ENCODE measurements at regions of chr17 and their contacts with region 1.

Region 1: GRCh38 chr17:59619293-59620063 is at the start of gene CLTC:
- DNase-seq: peak; percentile 97
- ATAC-seq: peak; percentile 85
- H3K4me3 Mint-ChIP-seq: peak within 1 kb of the TSS; percentile 89
- H3K27ac Mint-ChIP-seq: peak within 1 kb of the TSS; percentile 98
- H3K4me1 Mint-ChIP-seq: peaks cover 49% of the 10 kb centered on the region
- H3K27me3 Mint-ChIP-seq: no peaks in the 10 kb centered on the region
- total RNA-seq, gene CLTC: 180 to 186 TPM

Region 2: GRCh38 chr17:58344047-58344790 is 1275.3 kb before region 1 on chr17:
- CTCF ChIA-PET with region 1: no interaction called
- POLR2A ChIA-PET with region 1: no interaction called
- intact Hi-C with region 1: loop called in 1 of 2 experiments (anchors 10 kb)
- DNase-seq: peak; percentile 95
- ATAC-seq: peak; percentile 76
- H3K4me3 Mint-ChIP-seq: peak overlapping the region; percentile 100
- H3K27ac Mint-ChIP-seq: peak overlapping the region; percentile 99
- H3K4me1 Mint-ChIP-seq: peaks cover 74% of the 10 kb centered on the region
- H3K27me3 Mint-ChIP-seq: no peaks in the 10 kb centered on the region

Region 3: GRCh38 chr17:59220376-59221158 is 398.9 kb before region 1 on chr17 and contains the start of gene GDPD1:
- CTCF ChIA-PET with region 1: no interaction called
- POLR2A ChIA-PET with region 1: no interaction called
- intact Hi-C with region 1: loop called in 1 of 2 experiments (anchors 1 kb)
- DNase-seq: peak; percentile 99
- ATAC-seq: peak; percentile 99
- H3K4me3 Mint-ChIP-seq: peak within 1 kb of the TSS; percentile 93
- H3K27ac Mint-ChIP-seq: peak within 1 kb of the TSS; percentile 86
- H3K4me1 Mint-ChIP-seq: peaks cover 12% of the 10 kb centered on the region
- H3K27me3 Mint-ChIP-seq: no peaks in the 10 kb centered on the region
- total RNA-seq, gene GDPD1: 2.5 to 2.7 TPM

Region 4: DNA sequence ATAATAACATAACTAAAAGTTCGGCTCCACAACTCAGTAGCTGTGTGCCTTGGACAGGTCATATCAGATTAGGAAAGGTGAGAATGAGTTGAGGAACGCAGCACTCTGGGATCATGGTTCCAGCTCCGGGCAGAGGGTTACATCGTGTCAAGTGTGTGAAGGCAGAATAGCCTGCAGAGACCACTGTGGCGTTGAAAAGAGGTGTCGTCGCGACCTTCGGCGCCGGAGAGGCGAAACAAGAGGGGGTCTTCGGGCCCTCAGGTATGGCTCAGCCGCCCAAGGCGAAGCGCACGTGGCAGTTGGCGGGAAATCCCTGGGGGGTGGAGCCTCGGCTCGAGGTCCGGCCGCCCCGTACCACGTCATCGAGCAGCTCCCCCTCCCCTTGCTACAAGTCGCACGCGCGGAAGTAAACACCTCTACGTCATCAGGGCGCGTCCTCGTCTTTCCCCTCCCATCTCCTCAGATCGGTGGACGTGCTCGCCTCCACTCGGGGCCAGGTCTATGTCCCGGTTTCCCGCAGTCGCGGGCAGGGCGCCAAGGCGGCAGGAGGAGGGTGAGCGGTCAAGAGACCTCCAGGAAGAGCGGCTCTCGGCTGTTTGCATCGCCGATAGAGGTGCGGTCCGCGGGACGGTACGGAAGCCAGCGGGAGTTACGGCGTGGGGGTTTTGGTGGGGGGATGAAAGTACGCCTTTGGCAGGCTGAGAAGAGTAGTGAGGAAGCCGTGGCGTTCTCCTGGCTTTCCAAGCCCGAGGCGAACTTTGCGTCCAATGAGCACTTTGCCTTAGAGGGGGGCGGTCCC is 54.1 kb before region 1 on chr17 and contains the start of gene DHX40:
- CTCF ChIA-PET with region 1: interaction called, 5 read pairs
- POLR2A ChIA-PET with region 1: interaction called, 6 read pairs
- intact Hi-C with region 1: loop called (anchors 1 to 2 kb)
- DNase-seq: peak; percentile 98
- ATAC-seq: peak; percentile 89
- H3K4me3 Mint-ChIP-seq: peak within 1 kb of the TSS; percentile 99
- H3K27ac Mint-ChIP-seq: peak within 1 kb of the TSS; percentile 99
- H3K4me1 Mint-ChIP-seq: peaks cover 20% of the 10 kb centered on the region
- H3K27me3 Mint-ChIP-seq: no peaks in the 10 kb centered on the region
- total RNA-seq, gene DHX40: 22.9 to 24.1 TPM

Region 5: DNA sequence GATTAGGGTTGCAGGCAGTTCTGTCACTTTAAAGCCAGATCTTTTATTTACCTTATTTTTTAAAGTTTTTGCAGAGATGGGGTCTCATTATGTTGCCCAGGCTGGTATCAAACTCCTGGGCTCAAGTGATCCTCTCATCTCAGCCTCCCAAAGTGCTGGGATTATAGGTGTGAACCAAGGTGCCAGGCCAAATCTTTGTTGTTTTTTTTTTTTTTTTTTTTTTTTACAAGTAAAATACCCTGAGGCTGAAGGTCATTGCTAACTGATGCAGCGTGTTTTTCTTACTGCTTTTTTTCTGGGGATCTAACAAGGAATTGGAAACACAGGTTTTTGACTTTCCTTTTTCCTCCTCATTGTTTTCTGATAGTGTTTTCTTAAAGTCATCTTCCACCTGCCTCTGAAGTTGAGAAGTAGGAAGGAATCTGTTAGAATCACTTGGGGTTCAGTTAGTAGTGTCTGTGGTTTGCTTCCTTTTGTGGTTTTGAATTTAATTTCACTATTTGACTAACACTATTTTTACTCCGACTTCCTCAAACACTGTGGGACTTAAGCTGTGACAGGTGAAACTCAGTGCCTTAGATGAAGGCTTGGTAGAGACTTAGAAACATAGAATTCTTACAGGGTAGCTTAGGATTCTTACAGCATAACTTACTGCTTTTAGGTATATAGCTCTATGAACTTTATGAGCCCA is 22.5 kb after region 1 on chr17:
- CTCF ChIA-PET with region 1: interaction called, 6 read pairs
- POLR2A ChIA-PET with region 1: interaction called, 6 read pairs
- intact Hi-C with region 1: loop called in 1 of 2 experiments (anchors 1 kb)
- DNase-seq: no peak
- ATAC-seq: peak; percentile 96
- H3K4me3 Mint-ChIP-seq: peak overlapping the region; percentile 1
- H3K27ac Mint-ChIP-seq: peak overlapping the region; percentile 68
- H3K4me1 Mint-ChIP-seq: peaks cover 57% of the 10 kb centered on the region
- H3K27me3 Mint-ChIP-seq: no peaks in the 10 kb centered on the region

Region 6: GRCh38 chr17:59837308-59838051 is 218.0 kb after region 1 on chr17:
- CTCF ChIA-PET with region 1: interaction called, 3 read pairs
- POLR2A ChIA-PET with region 1: interaction called, 11 read pairs
- intact Hi-C with region 1: no loop called
- DNase-seq: peak; percentile 77
- ATAC-seq: peak; percentile 77
- H3K4me3 Mint-ChIP-seq: peak overlapping the region; percentile 100
- H3K27ac Mint-ChIP-seq: peak overlapping the region; percentile 100
- H3K4me1 Mint-ChIP-seq: peaks cover 41% of the 10 kb centered on the region
- H3K27me3 Mint-ChIP-seq: peaks cover 3% of the 10 kb centered on the region

Region 7: DNA sequence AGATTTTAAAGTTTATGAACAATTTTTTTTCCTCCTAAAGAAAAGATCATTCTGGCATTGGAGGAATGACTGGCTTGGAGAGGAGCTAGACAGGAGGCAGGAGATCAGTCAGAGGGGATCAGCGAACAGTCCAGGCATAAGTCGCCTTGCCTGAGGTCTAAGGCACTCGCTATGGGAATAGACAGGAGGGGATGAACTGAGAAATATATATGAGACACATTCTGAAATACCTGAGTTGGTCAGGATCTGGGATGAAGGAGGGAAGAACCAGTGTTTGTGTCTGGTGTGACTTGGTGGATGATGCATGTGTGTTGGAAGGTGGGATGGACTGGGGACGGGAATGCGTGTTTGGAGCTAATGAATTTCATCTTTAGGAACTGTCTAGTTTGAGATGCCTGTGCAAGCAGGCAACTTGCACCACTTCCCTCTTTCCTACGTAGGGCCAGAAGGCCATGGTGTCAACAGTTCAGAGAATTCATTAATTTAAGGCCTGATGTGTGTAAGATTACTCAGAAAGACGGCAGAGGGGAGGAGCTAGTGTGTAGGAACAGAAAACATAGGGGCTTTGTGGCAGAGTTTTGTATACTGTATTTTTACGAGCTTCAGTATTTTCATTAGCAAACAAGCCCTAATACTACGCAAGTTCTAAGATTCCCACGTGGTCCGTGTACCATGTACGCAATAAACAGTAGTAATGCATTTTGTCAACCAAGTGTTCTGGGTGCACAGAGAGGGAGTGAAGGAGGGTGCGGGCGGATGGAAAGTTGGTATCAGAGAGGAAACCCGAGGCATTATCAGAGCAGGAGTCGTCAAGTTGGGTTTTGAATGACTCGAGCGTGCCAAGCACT is 458.4 kb after region 1 on chr17:
- CTCF ChIA-PET with region 1: no interaction called
- POLR2A ChIA-PET with region 1: interaction called, 3 read pairs
- intact Hi-C with region 1: loop called in 1 of 2 experiments (anchors 1 kb)
- DNase-seq: peak; percentile 81
- ATAC-seq: peak; percentile 73
- H3K4me3 Mint-ChIP-seq: peak overlapping the region; percentile 84
- H3K27ac Mint-ChIP-seq: peak overlapping the region; percentile 95
- H3K4me1 Mint-ChIP-seq: peaks cover 19% of the 10 kb centered on the region
- H3K27me3 Mint-ChIP-seq: no peaks in the 10 kb centered on the region